ENCODE measurements at regions of chr1 and their contacts with region 1.

Region 1: DNA sequence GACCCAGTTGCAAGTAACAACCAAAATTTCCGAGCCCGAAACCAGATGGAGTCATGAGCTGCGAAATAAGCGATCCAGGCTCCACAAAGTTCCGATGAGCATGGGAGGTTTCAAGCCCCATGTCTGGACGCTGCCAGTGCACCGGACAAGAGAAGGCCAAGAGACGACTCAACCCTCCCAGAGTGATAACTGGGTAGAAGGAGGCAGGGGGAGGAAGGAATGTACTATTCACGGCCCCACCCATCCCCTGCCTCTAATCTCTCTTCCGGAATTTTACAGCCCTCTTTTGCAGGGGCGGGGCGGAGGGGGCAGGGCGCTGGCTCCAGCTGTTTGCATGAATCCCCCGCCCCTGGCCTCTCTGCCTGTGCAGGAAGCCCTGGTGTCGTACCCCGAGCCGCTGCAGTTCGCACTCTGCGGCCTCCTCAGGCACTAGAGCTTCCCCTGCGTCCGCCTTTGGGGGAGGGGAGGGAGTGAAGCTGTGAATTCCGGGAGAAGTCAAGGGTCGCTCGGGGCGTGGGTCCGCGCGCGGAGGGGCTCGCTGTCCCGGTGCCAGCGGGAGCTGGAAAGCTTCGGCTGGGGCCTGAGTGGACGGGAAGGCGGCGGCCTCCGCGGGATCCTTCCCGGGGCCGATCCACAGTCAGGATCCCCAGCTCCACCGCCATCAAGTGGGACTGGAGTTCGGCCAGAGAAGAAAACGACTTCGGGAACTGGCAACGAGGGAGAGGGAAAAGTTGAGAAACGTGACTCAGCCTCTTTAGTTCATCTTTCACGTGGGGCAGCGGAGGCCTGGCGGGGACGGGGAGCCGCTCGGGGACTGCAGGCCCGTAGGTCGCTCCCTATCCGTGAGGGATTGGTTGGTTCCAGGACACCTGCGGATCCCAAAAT is 6.3 kb upstream of the PTP4A2 start:
- DNase-seq: peak; percentile 94
- H3K4me3 Mint-ChIP-seq: peak overlapping the region; percentile 78
- H3K27ac Mint-ChIP-seq: peak overlapping the region; percentile 99
- H3K4me1 Mint-ChIP-seq: peaks cover 65% of the 10 kb centered on the region
- H3K27me3 Mint-ChIP-seq: no peaks in the 10 kb centered on the region

Region 2: DNA sequence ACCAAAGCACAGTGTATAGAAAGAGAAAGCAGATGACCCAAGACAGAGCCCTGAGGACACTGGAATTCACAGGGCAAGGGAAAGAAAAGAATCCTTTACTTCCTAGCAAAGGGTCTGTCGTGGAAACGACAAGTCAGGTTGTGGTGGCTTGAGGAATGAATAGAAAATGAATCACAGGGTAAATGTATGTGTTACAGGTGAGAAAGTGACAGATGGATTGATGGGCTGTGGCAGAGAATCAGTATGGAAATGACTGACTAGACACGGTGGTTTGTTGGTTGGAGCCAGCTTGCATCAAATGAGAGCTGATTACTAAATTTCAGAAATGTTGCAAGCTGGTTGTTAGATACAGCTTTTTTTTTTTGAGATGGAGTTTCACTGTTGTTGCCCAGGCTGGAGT is 53.2 kb before region 1 on chr1:
- CTCF ChIA-PET with region 1: no interaction called
- POLR2A ChIA-PET with region 1: interaction called, 17 read pairs
- DNase-seq: peak; percentile 55
- H3K4me3 Mint-ChIP-seq: peak overlapping the region; percentile 14
- H3K27ac Mint-ChIP-seq: peak overlapping the region; percentile 55
- H3K4me1 Mint-ChIP-seq: peaks cover 44% of the 10 kb centered on the region
- H3K27me3 Mint-ChIP-seq: no peaks in the 10 kb centered on the region

Region 3: GRCh38 chr1:31923901-31924535 is 20.4 kb before region 1 on chr1:
- CTCF ChIA-PET with region 1: interaction called, 35 read pairs
- POLR2A ChIA-PET with region 1: interaction called, 186 read pairs
- DNase-seq: no peak
- H3K4me3 Mint-ChIP-seq: peak overlapping the region; percentile 45
- H3K27ac Mint-ChIP-seq: peak overlapping the region; percentile 76
- H3K4me1 Mint-ChIP-seq: peaks cover 77% of the 10 kb centered on the region
- H3K27me3 Mint-ChIP-seq: no peaks in the 10 kb centered on the region

Region 4: GRCh38 chr1:31931593-31932225 is 12.7 kb before region 1 on chr1:
- CTCF ChIA-PET with region 1: interaction called, 35 read pairs
- POLR2A ChIA-PET with region 1: interaction called, 186 read pairs
- DNase-seq: no peak
- H3K4me3 Mint-ChIP-seq: peak overlapping the region; percentile 63
- H3K27ac Mint-ChIP-seq: peak overlapping the region; percentile 95
- H3K4me1 Mint-ChIP-seq: peaks cover 86% of the 10 kb centered on the region
- H3K27me3 Mint-ChIP-seq: no peaks in the 10 kb centered on the region

Region 5: DNA sequence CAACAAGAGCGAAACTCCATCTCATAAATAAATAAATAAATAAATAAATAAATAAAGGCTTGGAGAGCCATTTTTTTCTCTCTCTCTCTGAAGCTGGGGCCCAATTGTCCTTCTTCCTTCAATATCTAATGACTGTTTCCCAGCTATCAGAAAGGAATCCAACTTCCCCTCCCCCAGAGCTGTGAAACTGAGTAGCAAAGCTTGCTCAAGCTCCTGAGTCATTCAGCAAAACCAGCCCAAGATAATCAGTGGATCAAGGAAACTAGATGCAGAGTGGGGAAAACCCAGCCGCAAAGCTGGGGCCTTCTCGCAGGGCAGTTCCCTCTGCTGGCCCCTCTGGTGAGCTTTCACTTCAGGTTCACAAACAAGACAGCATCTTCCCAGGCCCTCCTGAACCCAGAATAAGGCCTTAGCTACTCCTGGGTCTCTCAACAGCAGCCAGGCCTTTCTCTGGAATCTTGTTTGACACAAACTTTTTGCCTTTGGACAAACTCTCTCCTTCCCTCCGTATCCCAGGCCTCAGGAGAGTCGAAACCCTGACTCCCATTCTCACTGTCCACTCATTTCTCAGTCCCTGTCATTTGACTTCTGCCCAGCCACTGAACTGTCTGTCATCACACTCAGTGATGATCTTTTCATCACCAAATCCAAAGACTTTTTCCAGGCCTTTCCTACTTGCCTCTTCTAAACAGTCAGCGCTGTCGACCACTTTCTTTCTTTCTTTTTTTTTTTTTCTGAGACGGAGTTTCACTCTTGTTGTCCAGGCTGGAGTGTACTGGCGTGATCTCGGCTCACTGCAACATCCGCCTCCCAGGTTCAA is 11.7 kb after region 1 on chr1:
- CTCF ChIA-PET with region 1: interaction called, 395 read pairs
- POLR2A ChIA-PET with region 1: interaction called, 222 read pairs
- DNase-seq: peak; percentile 87
- H3K4me3 Mint-ChIP-seq: peak overlapping the region; percentile 19
- H3K27ac Mint-ChIP-seq: peak overlapping the region; percentile 69
- H3K4me1 Mint-ChIP-seq: peaks cover 85% of the 10 kb centered on the region
- H3K27me3 Mint-ChIP-seq: no peaks in the 10 kb centered on the region

Region 6: GRCh38 chr1:32013386-32014198 is 69.1 kb after region 1 on chr1 and contains the start of gene KHDRBS1:
- CTCF ChIA-PET with region 1: interaction called, 4 read pairs
- POLR2A ChIA-PET with region 1: interaction called, 34 read pairs
- DNase-seq: peak; percentile 99
- H3K4me3 Mint-ChIP-seq: peak within 1 kb of the TSS; percentile 94
- H3K27ac Mint-ChIP-seq: peak within 1 kb of the TSS; percentile 94
- H3K4me1 Mint-ChIP-seq: peaks cover 30% of the 10 kb centered on the region
- H3K27me3 Mint-ChIP-seq: no peaks in the 10 kb centered on the region
- total RNA-seq, gene KHDRBS1: 168 to 169 TPM

Region 7: DNA sequence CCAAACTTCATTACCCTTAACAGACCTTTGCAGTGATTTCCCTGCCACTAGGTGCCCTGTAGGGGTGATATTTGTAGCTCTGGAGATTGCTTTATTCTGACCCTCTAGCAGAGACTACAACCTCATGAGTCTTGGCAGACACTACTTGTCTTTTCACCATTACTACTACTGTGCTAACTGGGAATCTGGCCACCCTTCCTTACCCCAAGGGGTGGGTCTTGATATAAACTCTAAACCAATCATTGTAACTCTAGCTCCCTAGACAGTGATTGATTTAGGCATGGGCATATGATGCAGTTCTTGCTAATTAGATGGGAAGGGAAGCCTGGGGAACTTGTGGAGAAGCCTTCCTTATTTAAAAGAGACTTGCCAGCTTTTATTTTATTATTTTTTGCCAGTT is 167.3 kb after region 1 on chr1:
- CTCF ChIA-PET with region 1: no interaction called
- POLR2A ChIA-PET with region 1: no interaction called
- DNase-seq: no peak
- H3K4me3 Mint-ChIP-seq: no peak overlapping the region
- H3K27ac Mint-ChIP-seq: no peak overlapping the region
- H3K4me1 Mint-ChIP-seq: peaks cover 51% of the 10 kb centered on the region
- H3K27me3 Mint-ChIP-seq: no peaks in the 10 kb centered on the region

Region 8: GRCh38 chr1:32179443-32180185 is 235.2 kb after region 1 on chr1 and contains the start of gene TXLNA:
- CTCF ChIA-PET with region 1: no interaction called
- POLR2A ChIA-PET with region 1: no interaction called
- DNase-seq: peak; percentile 92
- H3K4me3 Mint-ChIP-seq: peak within 1 kb of the TSS; percentile 88
- H3K27ac Mint-ChIP-seq: peak within 1 kb of the TSS; percentile 96
- H3K4me1 Mint-ChIP-seq: peaks cover 43% of the 10 kb centered on the region
- H3K27me3 Mint-ChIP-seq: no peaks in the 10 kb centered on the region
- total RNA-seq, gene TXLNA: 79.8 to 81.2 TPM

Measured in activated CD4-positive, alpha-beta memory T cell treated with anti-CD3 and anti-CD28 coated beads, Interleukin-2, amount 10 ng/mL, durations not matched to agents 7 days and 5 days (primary cell).